Cardiac septum (tissue), 1 donor: ENCODE measurements at regions of chr4 and their contacts with region 1.

Region 1: GRCh38 chr4:99563310-99564186 is at the start of gene TRMT10A:
- DNase-seq: peak; percentile 98
- total RNA-seq, gene TRMT10A: 2.7 TPM

Region 2: DNA sequence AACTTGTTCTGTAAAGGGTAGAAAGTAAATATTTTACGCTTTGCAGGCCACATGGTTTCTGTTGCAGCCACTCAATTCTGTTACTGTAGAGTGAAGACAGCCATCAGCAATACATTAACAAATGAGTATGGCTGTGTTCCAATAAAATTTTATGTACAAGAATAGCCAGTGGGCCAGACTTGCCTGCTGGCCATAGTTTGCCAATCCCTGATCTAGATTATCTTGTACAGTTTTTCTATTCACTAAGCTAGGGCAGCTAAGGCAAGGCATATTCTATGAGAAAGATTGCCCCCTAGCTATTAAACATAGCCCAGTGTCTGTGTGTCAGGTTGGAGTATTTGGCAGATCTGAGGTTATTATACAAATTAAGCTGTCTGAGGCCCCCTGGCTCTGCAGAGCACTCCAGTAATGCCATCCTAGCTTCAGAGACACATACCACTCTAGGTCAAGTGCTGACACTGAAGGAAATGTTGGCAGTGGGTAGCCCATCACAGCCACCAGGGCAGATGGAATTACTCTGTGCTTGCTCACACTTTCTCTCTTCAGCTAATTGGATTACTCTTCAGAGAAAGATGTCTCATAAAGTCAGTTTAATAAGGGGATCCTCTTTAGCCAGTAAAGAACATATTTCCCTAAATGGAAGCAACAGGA is 51.7 kb after region 1 on chr4:
- intact Hi-C with region 1: loop called (anchors 2 kb)
- DNase-seq: no peak

Region 3: GRCh38 chr4:99808260-99808857 is 244.8 kb after region 1 on chr4:
- intact Hi-C with region 1: loop called (anchors 2 kb)
- DNase-seq: peak; percentile 78

Region 4: DNA sequence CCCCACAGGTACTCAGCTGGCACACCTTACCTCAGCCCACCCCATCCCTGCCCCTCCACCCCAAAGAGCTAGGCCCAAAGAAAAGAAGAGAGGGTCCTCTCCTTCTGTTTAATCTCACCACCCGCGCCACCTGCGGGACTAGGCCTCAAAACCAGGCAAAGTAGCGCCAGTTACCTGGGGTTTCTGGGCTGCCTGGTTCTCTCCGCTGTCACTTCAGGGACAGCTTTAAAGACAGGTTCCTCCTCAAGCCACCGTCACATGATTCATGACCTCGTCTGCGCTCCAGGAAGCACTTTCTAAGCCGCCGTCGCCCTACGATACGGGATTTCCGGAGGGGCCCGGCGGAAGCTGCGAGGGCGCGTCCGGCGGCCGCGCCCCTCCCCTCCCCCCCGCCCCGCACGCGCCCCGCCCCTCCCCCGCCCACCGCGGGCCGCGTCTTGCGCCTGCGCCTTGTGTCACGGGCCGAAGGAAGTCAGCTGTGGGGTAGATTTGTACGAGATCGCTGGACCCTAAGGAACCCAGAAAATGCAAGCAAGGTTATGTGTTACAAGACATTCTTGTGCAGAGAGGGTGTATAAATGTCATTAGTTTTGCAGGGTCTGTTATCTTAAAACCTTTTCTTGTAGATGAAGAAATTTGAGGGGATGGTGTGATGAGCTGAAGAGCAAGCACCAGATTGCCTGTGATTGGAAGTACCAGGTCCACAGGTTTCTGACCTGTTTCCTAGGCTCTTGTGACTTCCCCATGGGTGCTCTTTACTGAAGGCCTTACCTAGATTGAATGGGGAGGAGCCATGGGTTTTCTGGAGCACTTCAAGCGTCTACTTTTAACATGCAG is 330.8 kb after region 1 on chr4 and contains the start of gene LAMTOR3:
- intact Hi-C with region 1: loop called (anchors 2 kb)
- DNase-seq: peak; percentile 96
- total RNA-seq, gene LAMTOR3: 26.4 TPM

Region 5: GRCh38 chr4:99949034-99949998 is 385.8 kb after region 1 on chr4:
- intact Hi-C with region 1: loop called (anchors 2 kb)
- DNase-seq: peak; percentile 94